ENCODE measurements at regions of chr19 and their contacts with region 1.

Region 1: GRCh38 chr19:54399189-54399588 is 16.1 kb upstream of the TTYH1 start:
- DNase-seq: peak; percentile 75
- H3K4me3 Mint-ChIP-seq: no peak overlapping the region
- H3K27ac Mint-ChIP-seq: no peak overlapping the region
- H3K4me1 Mint-ChIP-seq: peaks cover 8% of the 10 kb centered on the region
- H3K27me3 Mint-ChIP-seq: no peaks in the 10 kb centered on the region
- CTCF ChIP-seq: no peak

Region 2: DNA sequence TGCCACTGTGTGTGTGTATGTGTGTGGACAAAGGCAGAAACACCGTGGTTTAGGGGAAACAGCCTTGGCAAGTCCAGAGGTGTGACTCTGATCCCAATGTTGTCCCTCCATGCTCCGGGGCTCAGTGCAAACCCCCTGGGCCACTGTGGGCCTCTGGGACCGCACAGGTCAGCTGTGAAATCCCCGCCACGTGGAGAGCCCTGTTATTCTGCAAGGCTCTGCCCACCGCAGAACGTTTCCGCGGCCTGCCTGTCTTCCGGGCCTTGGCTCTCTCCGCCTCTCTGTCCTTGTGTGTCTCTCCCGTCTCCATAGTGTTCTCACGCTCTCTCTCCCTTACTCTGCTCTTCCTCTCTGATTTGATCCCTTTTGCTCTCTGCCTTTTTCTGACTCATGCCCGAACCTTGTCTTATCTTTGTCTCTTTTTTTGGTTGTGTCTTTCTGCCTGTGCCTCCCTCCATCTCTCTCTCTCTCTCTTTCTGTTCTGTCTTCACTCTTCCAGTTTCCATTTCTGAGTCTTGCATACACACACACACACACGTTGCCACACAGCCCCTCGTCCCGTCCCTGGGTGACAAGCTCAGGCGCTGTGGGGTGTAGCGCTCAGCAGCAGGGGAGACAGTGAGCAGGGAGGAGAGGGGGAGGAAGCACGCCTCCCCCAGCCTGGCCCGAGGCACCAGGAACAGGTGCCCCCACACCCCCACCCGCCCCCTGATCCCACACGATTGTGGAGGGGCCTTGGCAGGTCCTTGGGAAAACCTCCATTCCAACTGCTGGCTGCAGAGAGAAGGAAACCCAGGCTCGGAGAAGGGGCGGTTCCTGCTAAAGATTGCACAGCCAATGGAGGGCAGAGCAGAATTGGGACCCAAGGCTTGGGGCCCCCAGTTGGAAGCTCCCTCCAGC is 19.1 kb after region 1 on chr19:
- CTCF ChIA-PET with region 1: interaction called, 11 read pairs
- intact Hi-C with region 1: no loop called
- DNase-seq: no peak
- H3K4me3 Mint-ChIP-seq: no peak overlapping the region
- H3K27ac Mint-ChIP-seq: no peak overlapping the region
- H3K4me1 Mint-ChIP-seq: peaks cover 13% of the 10 kb centered on the region
- H3K27me3 Mint-ChIP-seq: peaks cover 51% of the 10 kb centered on the region
- CTCF ChIP-seq: no peak